ENCODE measurements at regions of chr3 and their contacts with region 1.

Region 1: DNA sequence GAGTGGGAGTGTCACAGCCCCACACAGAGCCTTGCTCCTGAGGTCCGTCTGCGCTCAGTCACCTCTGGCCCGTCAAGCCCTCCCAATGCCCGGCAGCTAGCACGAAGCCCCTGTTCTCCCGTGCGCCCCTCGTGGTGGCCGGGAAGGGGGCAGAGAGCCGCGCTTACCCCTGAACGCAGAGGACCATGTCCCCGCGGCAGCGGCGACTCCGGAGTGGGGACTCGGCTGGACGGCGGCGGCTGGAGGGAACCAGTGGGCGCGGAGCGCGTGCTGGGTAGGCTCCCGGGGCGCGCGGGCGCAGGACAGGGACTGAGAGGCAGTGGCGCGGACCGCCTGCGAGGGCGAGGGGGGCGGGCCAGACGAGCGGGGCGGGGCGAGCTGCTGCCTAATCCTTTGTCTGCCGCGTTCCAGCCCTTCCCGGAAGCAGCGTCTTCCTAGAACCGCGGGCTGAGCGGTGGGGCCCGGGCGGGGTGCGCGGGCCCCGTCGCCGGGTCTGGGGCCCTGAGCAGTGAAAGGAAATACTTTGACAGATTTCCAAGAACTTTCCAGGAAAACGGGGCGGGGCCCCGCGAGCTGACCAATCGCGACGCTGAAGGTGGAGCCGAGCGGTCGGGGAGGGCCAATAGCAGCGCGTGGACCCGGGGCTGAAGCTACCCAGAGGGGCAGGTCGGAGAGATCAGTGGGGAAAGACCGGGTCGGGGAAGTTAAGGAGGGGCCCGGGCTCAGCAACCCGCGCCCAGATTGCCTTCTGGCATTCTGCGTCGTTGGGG is at the start of gene CISH:
- DNase-seq: peak; percentile 65 to 85 (median 75)
- H3K4me3 ChIP-seq: peak within 1 kb of the TSS; percentile 48 to 85 (median 69)
- H3K27ac ChIP-seq: peak within 1 kb of the TSS in 27 of 59 donors; percentile 17 to 77 (median 49)
- H3K27me3 ChIP-seq: no peaks in the 10 kb centered on the region
- CTCF ChIP-seq: peak in 33 of 56 donors; percentile 3 to 57 (median 24)
- total RNA-seq, gene CISH: 0.15 to 7.8 (median 1.1) TPM

Region 2: DNA sequence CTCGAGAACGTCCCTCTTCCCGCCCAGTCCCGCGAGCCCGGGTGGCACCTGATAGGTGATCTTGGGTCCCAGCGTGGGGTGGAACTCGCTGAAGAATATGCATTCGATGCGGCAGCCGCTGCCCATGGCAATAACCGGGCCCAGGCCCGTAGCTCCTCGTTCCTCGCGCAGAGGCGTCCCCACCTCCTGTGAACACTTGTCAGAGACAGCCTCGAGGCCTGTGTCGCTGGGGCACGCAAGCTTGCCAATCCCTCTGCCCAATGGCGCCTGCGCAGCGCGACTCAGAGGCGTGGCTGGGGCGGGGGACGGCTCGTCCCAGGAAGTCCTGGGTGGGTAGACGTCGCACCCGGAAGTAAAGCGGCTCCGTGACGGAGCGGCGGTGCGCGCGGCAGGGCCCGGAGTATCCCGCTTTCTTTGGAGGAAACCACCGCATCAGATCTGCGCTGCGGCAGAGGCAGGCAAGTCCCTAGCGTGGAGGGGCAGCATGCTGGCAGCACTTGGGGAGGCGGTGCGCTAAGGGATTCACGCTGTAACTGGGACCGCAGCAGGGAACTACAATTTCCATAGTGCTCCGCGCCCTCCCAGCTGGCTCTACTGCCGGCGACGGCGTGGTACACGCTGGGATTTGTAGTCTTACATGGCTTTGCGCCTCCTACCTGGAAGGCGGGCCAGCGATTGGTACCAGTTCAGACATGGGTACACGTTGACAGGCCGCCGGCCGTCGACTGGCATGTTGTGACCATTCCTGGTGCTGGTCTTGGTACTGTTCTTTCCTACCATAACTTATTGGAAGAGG is 260.9 kb before region 1 on chr3 and contains the starts of genes CYB561D2 and NPRL2:
- intact Hi-C with region 1: loop called (anchors 5 to 10 kb)
- DNase-seq: peak; percentile 98 to 100 (median 98)
- H3K4me3 ChIP-seq: peak within 1 kb of the TSS; percentile 64 to 100 (median 86)
- H3K27ac ChIP-seq: peak within 1 kb of the TSS; percentile 90 to 100 (median 97)
- H3K27me3 ChIP-seq: no peaks in the 10 kb centered on the region
- CTCF ChIP-seq: peak in 34 of 56 donors; percentile 4 to 56 (median 24)
- total RNA-seq, gene CYB561D2: 7.6 to 20.0 (median 13.4) TPM
- total RNA-seq, gene NPRL2: 24.6 to 51.7 (median 35.3) TPM

Region 3: GRCh38 chr3:50436114-50436674 is 175.5 kb before region 1 on chr3:
- intact Hi-C with region 1: loop called in 1 of 2 experiments (anchors 10 kb)
- DNase-seq: peak in 8 of 10 donors; percentile 36 to 78 (median 58)
- H3K4me3 ChIP-seq: no peak overlapping the region
- H3K27ac ChIP-seq: no peak overlapping the region
- H3K27me3 ChIP-seq: no peaks in the 10 kb centered on the region
- CTCF ChIP-seq: peak; percentile 46 to 91 (median 79)

Region 4: GRCh38 chr3:50568947-50569749 is 42.5 kb before region 1 on chr3 and contains the start of gene HEMK1:
- intact Hi-C with region 1: loop called (anchors 1 to 2 kb)
- DNase-seq: peak; percentile 88 to 98 (median 95)
- H3K4me3 ChIP-seq: peak within 1 kb of the TSS; percentile 65 to 98 (median 89)
- H3K27ac ChIP-seq: peak within 1 kb of the TSS in 58 of 59 donors; percentile 6 to 96 (median 88)
- H3K27me3 ChIP-seq: no peaks in the 10 kb centered on the region
- CTCF ChIP-seq: peak in 26 of 56 donors; percentile 2 to 53 (median 18)
- total RNA-seq, gene HEMK1: 8.6 to 22.8 (median 14.2) TPM

Region 5: DNA sequence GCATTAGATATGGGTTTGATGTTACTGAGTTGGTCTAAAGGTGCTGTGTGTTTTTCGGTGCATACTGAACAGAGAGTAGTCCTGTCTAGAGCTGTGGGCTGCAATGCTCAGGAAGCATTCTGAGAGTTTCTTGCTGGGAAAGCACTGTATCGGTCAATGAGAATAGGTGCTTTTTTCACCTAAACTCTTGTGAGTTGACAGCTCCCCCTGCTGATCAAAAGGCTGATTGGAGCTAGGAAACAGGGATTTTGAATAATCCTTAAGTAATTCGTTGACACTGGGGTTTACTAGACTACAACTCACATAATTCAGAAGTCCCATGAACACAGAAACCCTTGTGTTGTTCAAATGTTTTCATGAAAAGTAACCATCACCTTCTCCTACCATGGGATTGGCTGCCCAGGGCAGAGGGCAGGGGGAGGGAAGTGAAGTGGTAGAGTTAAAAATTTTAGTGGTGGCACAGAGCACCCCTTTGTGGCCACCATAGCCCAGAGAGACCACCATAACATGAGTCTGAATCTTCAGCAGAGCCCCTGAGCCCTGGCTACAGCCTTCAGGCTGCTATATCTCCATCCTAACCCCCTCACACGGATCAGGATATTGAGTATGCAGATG is 760.4 kb after region 1 on chr3:
- intact Hi-C with region 1: loop called in 1 of 2 experiments (anchors 5 kb)
- DNase-seq: peak in 4 of 10 donors; percentile 39 to 69 (median 50)
- H3K4me3 ChIP-seq: no peak overlapping the region
- H3K27ac ChIP-seq: no peak overlapping the region
- H3K27me3 ChIP-seq: no peaks in the 10 kb centered on the region
- CTCF ChIP-seq: peak in 55 of 56 donors; percentile 41 to 83 (median 68)

Region 6: GRCh38 chr3:51391075-51391567 is 779.5 kb after region 1 on chr3 and contains the start of gene RBM15B:
- intact Hi-C with region 1: loop called in 1 of 2 experiments (anchors 2 kb)
- DNase-seq: peak; percentile 93 to 99 (median 97)
- H3K4me3 ChIP-seq: peak within 1 kb of the TSS; percentile 56 to 88 (median 74)
- H3K27ac ChIP-seq: peak within 1 kb of the TSS; percentile 39 to 96 (median 83)
- H3K27me3 ChIP-seq: no peaks in the 10 kb centered on the region
- CTCF ChIP-seq: peak in 48 of 56 donors; percentile 1 to 99 (median 96)
- total RNA-seq, gene RBM15B: 15.0 to 22.9 (median 19.1) TPM

Region 7: DNA sequence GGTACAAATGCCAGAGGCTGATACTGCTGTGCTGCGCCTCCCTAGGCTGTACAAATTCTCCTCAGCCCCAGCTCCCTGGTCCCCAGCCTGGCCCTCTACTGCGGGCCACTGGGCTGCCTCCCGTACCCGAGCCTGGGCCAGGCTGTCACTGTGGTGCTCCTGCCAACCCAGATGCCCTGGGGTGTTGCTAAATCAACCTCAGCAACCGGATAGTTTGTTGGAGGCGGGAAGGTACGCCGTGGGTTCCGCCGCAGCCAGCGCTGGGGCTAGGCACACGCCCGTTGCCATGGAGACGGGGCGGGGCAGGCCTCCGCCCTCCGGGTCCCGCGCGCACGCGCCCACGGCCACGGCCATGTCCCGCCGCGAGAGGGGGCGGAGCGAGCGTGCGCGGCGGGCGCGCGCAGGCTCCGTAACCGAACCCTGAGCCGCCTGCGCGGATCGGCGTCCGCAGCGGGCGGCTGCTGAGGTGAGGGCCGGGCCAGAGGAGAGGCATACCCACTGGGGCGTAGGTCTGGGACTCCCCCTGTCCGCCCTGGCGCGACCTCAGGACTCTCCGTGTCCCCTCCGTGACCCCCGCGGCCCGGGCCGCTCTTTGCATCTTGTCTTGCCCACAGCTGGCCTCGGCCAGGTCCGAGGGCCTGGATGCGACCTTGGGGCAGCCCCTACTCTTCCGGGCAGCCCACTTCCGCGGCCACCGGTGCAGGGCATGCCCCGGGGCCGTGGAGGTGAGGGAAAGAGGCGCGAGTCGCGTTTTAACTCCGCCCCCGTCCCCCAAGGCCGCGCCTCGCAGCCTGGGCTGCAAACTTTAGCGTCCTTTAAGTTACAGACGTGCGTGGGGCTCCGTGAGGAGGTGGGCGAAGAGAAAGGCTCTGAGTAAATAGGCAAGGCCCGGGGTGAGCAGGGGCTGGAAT is 1059.4 kb after region 1 on chr3 and contains the start of gene TEX264:
- intact Hi-C with region 1: loop called in 1 of 2 experiments (anchors 10 kb)
- DNase-seq: peak; percentile 71 to 92 (median 84)
- H3K4me3 ChIP-seq: peak within 1 kb of the TSS; percentile 77 to 100 (median 93)
- H3K27ac ChIP-seq: peak within 1 kb of the TSS; percentile 23 to 95 (median 86)
- H3K27me3 ChIP-seq: no peaks in the 10 kb centered on the region
- CTCF ChIP-seq: peak in 26 of 56 donors; percentile 3 to 58 (median 32)
- total RNA-seq, gene TEX264: 26.0 to 48.6 (median 36.4) TPM

Measured in dorsolateral prefrontal cortex (tissue), 120 donors.